RWPE1 (cell line): ENCODE measurements at regions of chr1 and their contacts with region 1.

Region 1: GRCh38 chr1:203267347-203267846 is 37.9 kb upstream of the BTG2 start:
- DNase-seq: peak; percentile 74
- H3K27ac ChIP-seq: peak overlapping the region; percentile 63
- CTCF ChIP-seq: peak; percentile 94

Region 2: DNA sequence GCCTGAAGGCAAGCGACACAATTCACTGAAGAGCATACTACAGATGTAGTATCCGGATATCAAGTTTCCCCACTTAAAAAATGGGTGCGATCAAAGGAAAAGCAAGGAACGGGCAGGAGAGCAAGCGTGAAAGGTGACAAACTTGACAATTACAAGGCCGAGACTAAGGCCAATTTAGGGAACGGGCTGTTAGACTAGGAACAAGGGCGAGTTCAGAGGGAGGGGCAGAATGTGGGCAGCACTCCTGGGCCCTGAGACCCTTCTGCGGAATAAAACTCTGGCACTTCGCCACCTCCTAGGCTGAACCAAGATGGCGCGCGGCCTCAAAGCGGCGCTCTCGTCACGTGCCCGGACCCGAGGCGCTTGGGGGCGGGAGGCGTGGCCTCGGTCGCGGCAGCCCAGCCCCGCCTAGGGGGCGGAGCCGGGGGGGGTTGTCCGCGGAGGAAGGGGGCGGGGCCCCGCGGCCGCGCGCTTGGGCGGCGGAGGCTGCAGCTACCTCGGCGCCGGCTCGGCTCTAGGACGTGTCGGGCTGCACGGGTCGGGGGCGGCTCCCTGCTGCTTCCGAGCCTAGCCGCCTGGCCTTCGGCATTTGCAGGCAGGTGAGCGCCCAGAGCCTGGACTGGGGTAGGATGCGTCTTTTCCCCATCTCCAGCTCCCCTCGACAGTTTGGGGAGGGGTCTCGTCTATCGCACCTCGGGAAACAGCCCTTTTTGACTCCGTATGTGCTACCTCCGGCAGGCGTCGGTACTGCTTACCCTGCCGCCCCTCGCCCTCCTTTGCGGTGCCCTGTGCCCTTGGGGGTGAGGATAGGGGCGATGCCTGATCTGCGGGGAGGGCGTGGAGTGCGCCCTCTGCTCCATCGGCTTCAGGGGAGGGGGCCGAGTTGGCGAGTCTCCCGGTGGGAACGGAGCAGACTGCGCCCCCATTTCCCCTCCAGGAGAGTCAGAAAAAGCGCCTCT is 241.1 kb before region 1 on chr1 and contains the start of gene PPFIA4:
- CTCF ChIA-PET with region 1: interaction called, 13 read pairs
- POLR2A ChIA-PET with region 1: no interaction called
- DNase-seq: peak; percentile 99
- H3K27ac ChIP-seq: peak within 1 kb of the TSS; percentile 42; the same call in 1 of the 2 replicates
- CTCF ChIP-seq: peak; percentile 23; the same call in 1 of the 2 replicates

Region 3: GRCh38 chr1:203046984-203047630 is 220.3 kb before region 1 on chr1:
- CTCF ChIA-PET with region 1: interaction called, 14 read pairs
- POLR2A ChIA-PET with region 1: no interaction called
- DNase-seq: peak; percentile 92
- H3K27ac ChIP-seq: peak overlapping the region; percentile 57; the same call in 1 of the 2 replicates
- CTCF ChIP-seq: no peak

Region 4: GRCh38 chr1:203216274-203217138 is 50.9 kb before region 1 on chr1:
- CTCF ChIA-PET with region 1: interaction called, 46 read pairs
- POLR2A ChIA-PET with region 1: no interaction called
- DNase-seq: peak; percentile 77
- H3K27ac ChIP-seq: no peak overlapping the region
- CTCF ChIP-seq: peak; percentile 72

Region 5: DNA sequence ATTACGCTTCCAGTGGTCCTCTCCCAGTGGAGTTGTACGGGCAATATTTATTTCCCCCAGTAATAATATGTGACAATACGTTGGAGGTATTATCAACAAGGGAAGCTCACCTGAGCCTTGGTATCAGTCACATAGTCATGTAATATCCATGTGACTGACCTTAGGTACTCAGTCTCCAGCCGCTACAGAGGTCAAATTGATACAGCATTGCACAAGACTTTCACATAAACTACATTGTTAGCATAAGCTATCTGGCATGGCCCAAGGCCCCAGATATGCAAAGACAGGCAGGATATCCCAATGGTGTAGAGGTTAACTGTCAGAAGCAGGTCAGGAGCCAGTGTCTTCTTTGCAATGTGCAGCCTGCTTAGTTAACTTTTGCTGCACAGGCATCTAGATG is 22.6 kb before region 1 on chr1:
- CTCF ChIA-PET with region 1: interaction called, 32 read pairs
- POLR2A ChIA-PET with region 1: no interaction called
- DNase-seq: no peak
- H3K27ac ChIP-seq: no peak overlapping the region
- CTCF ChIP-seq: no peak

Region 6: DNA sequence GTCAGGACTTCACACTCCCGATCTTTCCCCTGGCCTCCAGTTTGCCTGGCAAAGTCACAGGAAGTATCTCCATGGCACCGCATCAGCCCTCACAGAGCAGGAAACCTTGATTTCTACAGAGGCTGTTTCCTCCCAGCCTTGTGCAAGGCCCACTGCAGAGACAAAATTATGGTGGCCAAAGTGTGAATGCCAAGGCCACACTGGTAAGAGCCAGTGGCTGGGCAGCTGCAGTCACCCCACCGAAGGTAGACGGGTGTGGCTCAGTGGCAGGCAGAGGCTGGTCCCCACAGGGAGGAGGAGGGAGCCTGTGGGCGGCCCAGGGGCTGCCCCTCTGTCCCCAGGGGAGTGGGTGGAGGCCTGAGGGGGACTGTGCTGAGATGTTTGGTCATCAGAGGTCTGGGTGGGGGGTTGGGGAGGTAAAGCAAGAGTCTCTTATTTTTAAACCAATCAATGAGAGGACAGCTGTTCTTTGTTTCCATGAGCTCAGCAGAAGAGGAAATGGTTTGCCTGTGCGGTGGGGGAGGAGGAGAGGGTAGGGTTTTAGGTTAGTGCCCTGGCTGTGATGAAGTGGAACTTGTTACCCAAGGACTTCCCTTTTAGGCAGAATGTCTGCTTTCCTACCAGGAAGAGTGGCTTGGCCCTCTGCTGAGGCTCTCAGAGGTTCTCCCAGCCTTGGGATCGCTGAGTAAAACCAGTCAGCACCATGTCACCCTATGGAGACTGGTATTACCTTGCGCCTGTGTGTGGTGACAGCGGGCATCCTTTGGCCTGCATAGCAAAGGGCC is 19.9 kb after region 1 on chr1:
- CTCF ChIA-PET with region 1: interaction called, 23 read pairs
- POLR2A ChIA-PET with region 1: no interaction called
- DNase-seq: no peak
- H3K27ac ChIP-seq: peak overlapping the region; percentile 48
- CTCF ChIP-seq: no peak

Region 7: DNA sequence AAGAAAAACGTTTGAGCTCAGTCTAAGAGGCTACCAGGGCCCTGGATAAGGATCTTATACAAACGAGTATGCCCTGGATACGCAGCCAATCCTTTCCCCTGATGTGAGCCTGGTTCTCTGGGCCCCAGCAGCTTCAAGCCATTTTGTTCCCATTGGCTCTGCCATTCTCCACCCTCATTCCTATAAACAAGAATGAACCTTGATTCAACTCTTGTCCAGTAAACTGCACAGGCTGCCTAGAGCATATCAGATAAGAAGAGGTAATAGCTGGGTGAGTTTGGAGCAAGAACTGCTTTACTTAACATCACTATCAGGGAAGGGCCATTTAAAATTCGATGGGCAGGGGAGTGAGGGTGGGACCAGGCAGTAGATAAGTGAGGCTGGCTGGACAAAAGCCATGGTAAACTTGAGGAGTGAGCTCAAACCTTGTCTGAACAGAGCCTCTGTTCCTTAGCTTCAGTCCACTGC is 49.3 kb after region 1 on chr1:
- CTCF ChIA-PET with region 1: interaction called, 14 read pairs
- POLR2A ChIA-PET with region 1: no interaction called
- DNase-seq: no peak
- H3K27ac ChIP-seq: no peak overlapping the region
- CTCF ChIP-seq: no peak

Region 8: DNA sequence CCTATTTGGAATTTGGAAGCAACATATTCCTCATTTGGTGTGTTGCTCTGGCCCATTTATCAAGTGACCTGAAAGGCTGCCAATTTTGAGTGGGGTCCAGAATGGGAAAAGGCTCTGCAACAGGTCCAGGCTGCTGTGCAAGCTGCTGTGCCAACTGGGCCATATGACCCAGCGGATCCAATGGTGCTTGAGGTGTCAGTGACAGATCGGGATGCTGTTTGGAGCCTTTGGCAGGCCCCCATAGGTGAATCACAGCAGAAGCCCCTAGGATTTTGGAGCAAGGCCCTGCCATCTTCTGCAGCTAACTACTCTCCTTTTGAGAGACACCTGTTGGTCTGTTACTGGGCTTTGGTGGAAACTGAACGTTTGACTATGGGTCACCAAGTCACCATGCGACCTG is 970.7 kb after region 1 on chr1:
- CTCF ChIA-PET with region 1: no interaction called
- POLR2A ChIA-PET with region 1: no interaction called
- DNase-seq: no peak
- H3K27ac ChIP-seq: no peak overlapping the region
- CTCF ChIP-seq: no peak

Region 9: GRCh38 chr1:204341380-204341779 is 1074.0 kb after region 1 on chr1:
- CTCF ChIA-PET with region 1: no interaction called
- POLR2A ChIA-PET with region 1: no interaction called
- DNase-seq: no peak
- H3K27ac ChIP-seq: no peak overlapping the region
- CTCF ChIP-seq: no peak

Region 10: GRCh38 chr1:204615881-204616280 is 1348.5 kb after region 1 on chr1:
- CTCF ChIA-PET with region 1: no interaction called
- POLR2A ChIA-PET with region 1: no interaction called
- DNase-seq: no peak
- H3K27ac ChIP-seq: no peak overlapping the region
- CTCF ChIP-seq: no peak